MCF 10A (cell line): ENCODE measurements at regions of chr15 and their contacts with region 1.

Region 1: DNA sequence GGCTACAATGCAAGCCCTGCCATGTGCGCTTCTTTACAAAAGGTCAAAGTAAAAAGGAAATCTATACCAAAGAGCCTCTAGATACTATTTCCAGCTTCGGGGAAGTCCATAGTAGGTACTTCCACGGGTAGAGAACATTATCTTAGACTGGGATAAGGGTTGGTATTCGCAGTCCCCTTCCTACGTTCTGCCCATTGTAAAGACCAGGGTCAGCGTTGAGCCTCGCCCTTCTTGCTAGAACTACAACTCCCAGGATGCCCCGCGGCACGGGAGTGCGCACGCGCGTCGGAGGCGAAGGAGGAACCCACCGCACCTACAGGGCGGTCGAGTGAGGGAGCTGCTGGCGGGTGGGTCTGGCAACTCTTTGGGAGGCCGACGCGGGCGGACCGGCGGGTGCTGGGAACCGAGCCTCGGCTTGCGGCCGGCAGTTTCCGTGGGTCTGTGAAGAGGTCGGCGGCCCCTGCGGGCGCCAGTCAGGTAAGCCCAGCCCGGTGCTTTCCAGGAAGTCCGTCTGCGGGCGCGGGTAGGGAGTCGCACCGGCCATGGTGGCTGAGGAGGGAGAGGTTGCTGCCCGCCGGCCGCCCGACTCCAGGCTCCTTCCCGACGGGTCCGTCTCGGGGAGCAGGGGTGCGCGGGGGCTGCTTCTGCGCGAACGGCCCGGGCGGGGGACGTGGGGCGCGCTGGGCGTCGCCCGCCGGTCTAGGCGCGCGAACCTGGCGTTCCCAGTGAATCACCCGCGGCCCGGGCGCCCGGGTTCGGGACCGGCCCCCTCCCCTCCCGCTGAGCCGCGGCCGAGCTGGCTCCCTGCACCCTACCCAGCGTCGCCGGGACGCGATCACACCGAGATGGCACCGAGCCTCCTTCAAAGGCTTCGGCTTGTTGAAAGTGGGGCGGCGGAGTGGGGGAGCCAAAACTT is at the start of gene TMOD3:
- DNase-seq: peak; percentile 92
- H3K4me3 Mint-ChIP-seq: peak within 1 kb of the TSS; percentile 96
- H3K27ac Mint-ChIP-seq: peak within 1 kb of the TSS; percentile 96
- H3K4me1 Mint-ChIP-seq: peaks cover 57% of the 10 kb centered on the region
- H3K27me3 Mint-ChIP-seq: no peaks in the 10 kb centered on the region
- CTCF ChIP-seq: no peak
- total RNA-seq, gene TMOD3: 93.5 and 94.6 TPM in 2 replicates

Region 2: DNA sequence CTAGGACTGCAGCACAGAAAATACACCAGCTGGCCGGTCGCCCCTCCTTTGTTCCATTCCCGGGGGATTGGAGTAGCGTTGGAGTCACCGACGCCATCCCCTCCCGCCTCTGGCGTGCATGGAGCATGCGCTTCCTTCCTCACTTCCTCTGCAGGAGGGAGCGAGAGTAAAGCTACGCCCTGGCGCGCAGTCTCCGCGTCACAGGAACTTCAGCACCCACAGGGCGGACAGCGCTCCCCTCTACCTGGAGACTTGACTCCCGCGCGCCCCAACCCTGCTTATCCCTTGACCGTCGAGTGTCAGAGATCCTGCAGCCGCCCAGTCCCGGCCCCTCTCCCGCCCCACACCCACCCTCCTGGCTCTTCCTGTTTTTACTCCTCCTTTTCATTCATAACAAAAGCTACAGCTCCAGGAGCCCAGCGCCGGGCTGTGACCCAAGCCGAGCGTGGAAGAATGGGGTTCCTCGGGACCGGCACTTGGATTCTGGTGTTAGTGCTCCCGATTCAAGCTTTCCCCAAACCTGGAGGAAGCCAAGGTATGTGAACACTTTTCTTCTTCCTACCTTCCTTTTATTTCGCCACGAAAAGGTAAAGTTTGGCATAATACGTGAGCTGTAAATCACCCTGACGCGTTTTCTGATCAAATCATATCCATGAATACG is 148.2 kb before region 1 on chr15 and contains the start of gene SCG3:
- CTCF ChIA-PET with region 1: no interaction called
- POLR2A ChIA-PET with region 1: no interaction called
- intact Hi-C with region 1: no loop called
- DNase-seq: peak; percentile 21
- H3K4me3 Mint-ChIP-seq: no peak within 1 kb of the TSS
- H3K27ac Mint-ChIP-seq: no peak within 1 kb of the TSS
- H3K4me1 Mint-ChIP-seq: peaks cover 11% of the 10 kb centered on the region
- H3K27me3 Mint-ChIP-seq: peaks cover 22% of the 10 kb centered on the region
- CTCF ChIP-seq: no peak
- total RNA-seq, gene SCG3: not detected in 2 replicates

Region 3: DNA sequence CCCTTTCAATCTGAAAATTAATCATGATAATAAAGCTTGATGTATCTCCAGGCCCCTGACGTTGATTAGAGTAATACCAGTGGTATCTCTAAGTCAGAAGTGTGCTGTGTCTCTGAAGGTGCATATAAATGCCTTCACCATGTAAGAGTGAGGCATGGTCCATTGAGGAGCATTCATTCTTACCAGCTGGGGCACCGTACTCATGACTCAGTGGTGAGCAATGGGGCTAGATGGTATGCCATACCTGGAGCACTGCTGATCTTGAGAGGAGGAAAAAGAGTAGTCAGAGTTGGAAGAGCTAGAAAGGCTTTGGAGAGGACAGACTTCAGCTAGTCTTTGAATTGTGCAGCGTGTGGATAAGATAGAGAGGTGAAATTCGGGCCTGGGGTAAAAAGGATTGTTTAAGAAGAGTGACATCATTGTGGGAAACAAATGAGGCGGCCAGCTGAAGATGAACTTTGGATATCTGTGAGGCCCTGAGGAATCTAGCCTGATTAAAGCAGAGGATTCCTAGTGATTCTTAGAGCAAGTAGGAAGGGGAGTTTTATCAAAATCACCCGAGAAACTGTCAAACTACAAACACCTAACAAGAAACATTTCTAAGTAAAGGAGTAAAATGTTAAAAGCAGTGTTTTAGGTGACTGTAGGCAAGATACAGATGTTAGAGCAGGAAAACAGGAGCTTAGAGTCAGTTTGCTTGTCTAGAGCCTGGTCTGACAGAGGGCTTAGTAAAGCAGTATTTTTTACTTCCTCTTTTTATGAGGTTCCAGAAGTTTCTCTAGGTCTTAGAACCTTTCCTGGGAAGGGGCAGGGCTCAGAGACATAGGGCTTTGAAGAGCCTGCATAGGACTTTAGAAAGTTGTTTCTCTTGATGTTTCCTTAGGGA is 13.5 kb after region 1 on chr15:
- CTCF ChIA-PET with region 1: interaction called, 3 read pairs
- POLR2A ChIA-PET with region 1: interaction called, 51 read pairs
- intact Hi-C with region 1: no loop called
- DNase-seq: peak; percentile 75
- H3K4me3 Mint-ChIP-seq: peak overlapping the region; percentile 9
- H3K27ac Mint-ChIP-seq: peak overlapping the region; percentile 69
- H3K4me1 Mint-ChIP-seq: peaks cover 54% of the 10 kb centered on the region
- H3K27me3 Mint-ChIP-seq: no peaks in the 10 kb centered on the region
- CTCF ChIP-seq: no peak

Region 4: DNA sequence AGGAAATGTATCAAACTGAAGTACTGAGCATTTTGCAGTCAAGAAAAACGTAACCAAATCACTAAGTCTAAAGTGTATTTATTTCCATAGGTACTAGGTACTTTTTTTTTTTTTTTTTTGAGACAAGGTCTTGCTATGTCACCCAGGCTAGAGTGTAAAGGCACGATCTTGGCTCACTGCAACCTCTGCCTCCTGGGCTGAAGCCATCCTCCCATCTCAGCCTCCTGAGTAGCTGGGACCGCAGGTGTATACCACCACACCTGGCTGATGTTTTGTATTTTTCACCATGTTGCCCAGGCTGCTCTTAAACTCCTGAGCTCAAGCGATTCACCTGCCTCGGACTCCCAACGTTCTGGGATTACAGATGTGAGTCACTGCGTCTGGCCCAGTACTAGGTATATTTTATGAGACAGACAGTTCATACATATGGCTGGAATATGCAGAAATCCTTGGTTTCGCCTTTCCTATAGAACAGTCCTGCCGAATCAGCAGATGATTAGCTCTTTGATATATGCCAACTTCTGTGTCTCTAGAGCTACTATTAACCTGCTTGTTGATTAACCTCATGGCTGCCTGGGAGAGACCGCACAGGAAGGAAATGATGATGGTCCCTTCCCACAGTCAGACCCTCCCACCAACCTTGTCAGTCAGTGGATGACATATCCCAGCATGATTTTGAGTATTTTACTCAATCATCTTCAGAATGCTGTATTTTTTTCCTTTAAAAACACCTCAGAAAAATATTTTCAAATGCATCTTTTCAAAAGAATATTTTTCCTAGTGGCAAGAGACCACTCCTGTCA is 32.1 kb after region 1 on chr15:
- CTCF ChIA-PET with region 1: no interaction called
- POLR2A ChIA-PET with region 1: interaction called, 11 read pairs
- intact Hi-C with region 1: no loop called
- DNase-seq: peak; percentile 64
- H3K4me3 Mint-ChIP-seq: no peak overlapping the region
- H3K27ac Mint-ChIP-seq: peak overlapping the region; percentile 67
- H3K4me1 Mint-ChIP-seq: peaks cover 61% of the 10 kb centered on the region
- H3K27me3 Mint-ChIP-seq: no peaks in the 10 kb centered on the region
- CTCF ChIP-seq: no peak

Region 5: DNA sequence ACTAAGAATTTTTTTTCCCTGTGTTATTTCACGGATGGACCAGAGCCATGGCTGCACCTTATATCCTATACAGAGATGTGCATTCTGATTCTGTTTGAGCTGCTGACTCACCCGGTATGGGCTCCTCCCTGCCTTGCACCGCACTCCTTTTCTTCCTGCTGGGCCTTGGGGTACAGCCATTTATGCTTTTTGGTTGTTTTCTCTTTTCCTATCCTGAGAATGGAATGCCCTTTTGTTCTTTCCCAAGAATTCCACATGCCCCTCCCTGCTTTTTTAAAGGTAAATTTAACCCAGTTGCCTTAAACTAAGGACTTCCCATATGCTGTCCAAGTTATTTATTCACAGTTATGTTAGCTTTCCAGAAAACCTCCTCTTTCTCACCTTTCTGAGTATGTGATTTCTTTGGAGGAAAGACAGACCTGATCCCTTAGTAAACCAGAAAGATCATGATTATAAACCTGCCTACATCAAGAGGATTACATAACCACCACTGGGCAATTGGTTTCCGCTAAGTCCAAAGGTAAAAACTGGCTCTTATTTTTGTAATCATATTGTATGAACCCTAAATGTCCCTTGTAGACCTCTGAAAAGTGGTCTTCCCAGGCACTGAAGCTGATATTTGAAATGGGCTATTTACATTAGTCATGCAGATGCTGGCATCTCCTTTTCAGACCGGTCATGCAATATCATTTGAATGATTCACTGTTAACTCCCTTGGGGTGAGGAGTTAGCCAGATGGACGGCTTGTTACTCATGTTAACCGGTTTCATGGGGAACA is 45.3 kb after region 1 on chr15:
- CTCF ChIA-PET with region 1: interaction called, 3 read pairs
- POLR2A ChIA-PET with region 1: interaction called, 28 read pairs
- intact Hi-C with region 1: loop called (anchors 1 kb)
- DNase-seq: peak; percentile 98
- H3K4me3 Mint-ChIP-seq: peak overlapping the region; percentile 68
- H3K27ac Mint-ChIP-seq: peak overlapping the region; percentile 97
- H3K4me1 Mint-ChIP-seq: peaks cover 47% of the 10 kb centered on the region
- H3K27me3 Mint-ChIP-seq: no peaks in the 10 kb centered on the region
- CTCF ChIP-seq: no peak